ENCODE measurements at regions of chr13 and their contacts with region 1.

Region 1: DNA sequence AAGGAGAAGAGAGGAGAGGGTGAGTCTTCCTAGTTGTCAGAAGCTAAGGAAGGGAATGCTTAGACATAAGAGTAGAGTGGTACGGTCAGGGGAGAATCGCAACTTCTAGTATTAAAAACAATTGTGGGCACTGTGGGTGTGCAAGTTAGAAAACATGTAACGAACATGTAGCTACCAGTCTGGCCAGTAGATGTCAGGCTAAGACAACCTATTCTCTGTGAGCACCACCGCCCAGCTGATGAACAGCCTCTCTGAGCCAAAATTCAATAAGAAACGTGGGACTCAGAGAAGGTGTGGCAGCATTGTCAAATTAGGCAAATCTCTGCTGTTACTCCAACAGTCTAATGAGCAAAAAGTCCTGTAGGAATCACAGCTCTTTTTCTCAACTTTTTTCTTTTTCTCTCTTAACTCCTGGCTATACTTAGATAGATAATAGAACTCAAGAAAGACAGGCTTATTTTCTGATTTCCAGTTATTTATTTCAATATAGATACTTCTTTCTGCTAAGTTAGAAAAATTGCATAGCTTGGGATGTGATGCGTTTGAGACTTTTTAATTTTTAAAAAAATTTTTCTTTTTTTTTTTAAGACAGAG is 186.2 kb downstream of the USP12 start:
- DNase-seq: peak; percentile 62
- H3K4me3 ChIP-seq: no peak overlapping the region
- H3K27ac ChIP-seq: no peak overlapping the region
- H3K4me1 ChIP-seq: no peaks in the 10 kb centered on the region
- H3K27me3 ChIP-seq: peaks cover 3% of the 10 kb centered on the region
- CTCF ChIP-seq: peak; percentile 70 to 72

Region 2: GRCh38 chr13:26442541-26442940 is 542.8 kb before region 1 on chr13:
- CTCF ChIA-PET with region 1: no interaction called
- dilution Hi-C with region 1: no loop called
- in situ Hi-C with region 1: no loop called
- intact Hi-C with region 1: no loop called
- DNase-seq: no peak
- H3K4me3 ChIP-seq: no peak overlapping the region
- H3K27ac ChIP-seq: no peak overlapping the region
- H3K4me1 ChIP-seq: no peaks in the 10 kb centered on the region
- H3K27me3 ChIP-seq: no peaks in the 10 kb centered on the region
- CTCF ChIP-seq: no peak

Region 3: GRCh38 chr13:26653310-26653709 is 332.1 kb before region 1 on chr13:
- CTCF ChIA-PET with region 1: no interaction called
- dilution Hi-C with region 1: no loop called
- in situ Hi-C with region 1: no loop called
- intact Hi-C with region 1: no loop called
- DNase-seq: peak; percentile 50
- H3K4me3 ChIP-seq: no peak overlapping the region
- H3K27ac ChIP-seq: no peak overlapping the region
- H3K4me1 ChIP-seq: no peaks in the 10 kb centered on the region
- H3K27me3 ChIP-seq: no peaks in the 10 kb centered on the region
- CTCF ChIP-seq: no peak

Region 4: GRCh38 chr13:26813321-26813979 is 171.9 kb before region 1 on chr13:
- CTCF ChIA-PET with region 1: no interaction called
- dilution Hi-C with region 1: no loop called
- in situ Hi-C with region 1: no loop called
- intact Hi-C with region 1: no loop called
- DNase-seq: no peak
- H3K4me3 ChIP-seq: no peak overlapping the region
- H3K27ac ChIP-seq: no peak overlapping the region
- H3K4me1 ChIP-seq: no peaks in the 10 kb centered on the region
- H3K27me3 ChIP-seq: peaks cover 2% of the 10 kb centered on the region
- CTCF ChIP-seq: no peak

Region 5: DNA sequence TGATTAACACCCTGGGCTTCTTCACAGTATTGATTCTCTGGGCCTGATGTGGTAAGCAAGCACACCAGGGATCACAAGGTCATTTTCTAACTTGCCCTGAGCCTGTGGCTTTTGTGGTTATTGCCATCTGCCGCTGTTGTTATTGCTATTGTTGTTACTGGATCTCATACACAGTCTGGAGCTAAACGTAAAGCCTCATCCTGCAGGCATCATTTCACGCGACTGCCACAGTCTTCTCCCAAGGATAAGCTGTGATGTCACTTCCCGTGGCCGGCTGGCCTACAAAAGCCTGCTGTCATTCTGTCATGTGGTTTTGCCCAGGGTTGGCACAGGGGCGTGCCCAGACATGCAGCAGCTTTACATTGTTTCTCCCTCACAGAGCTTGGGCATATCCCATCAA is 70.8 kb before region 1 on chr13:
- CTCF ChIA-PET with region 1: no interaction called
- dilution Hi-C with region 1: no loop called
- in situ Hi-C with region 1: no loop called
- intact Hi-C with region 1: no loop called
- DNase-seq: peak; percentile 86
- H3K4me3 ChIP-seq: no peak overlapping the region
- H3K27ac ChIP-seq: no peak overlapping the region
- H3K4me1 ChIP-seq: peaks cover 13% of the 10 kb centered on the region
- H3K27me3 ChIP-seq: no peaks in the 10 kb centered on the region
- CTCF ChIP-seq: no peak

Region 6: GRCh38 chr13:26946684-26947343 is 38.6 kb before region 1 on chr13:
- CTCF ChIA-PET with region 1: interaction called, 3 read pairs
- dilution Hi-C with region 1: no loop called
- in situ Hi-C with region 1: no loop called
- intact Hi-C with region 1: loop called (anchors 1 kb)
- DNase-seq: peak; percentile 29
- H3K4me3 ChIP-seq: no peak overlapping the region
- H3K27ac ChIP-seq: no peak overlapping the region
- H3K4me1 ChIP-seq: no peaks in the 10 kb centered on the region
- H3K27me3 ChIP-seq: no peaks in the 10 kb centered on the region
- CTCF ChIP-seq: peak; percentile 78 to 86

Region 7: GRCh38 chr13:27203854-27204253 is 218.5 kb after region 1 on chr13:
- CTCF ChIA-PET with region 1: no interaction called
- dilution Hi-C with region 1: no loop called
- in situ Hi-C with region 1: loop called in 1 of 2 experiments (anchors 10 kb)
- intact Hi-C with region 1: loop called (anchors 1 kb)
- DNase-seq: peak; percentile 15
- H3K4me3 ChIP-seq: no peak overlapping the region
- H3K27ac ChIP-seq: no peak overlapping the region
- H3K4me1 ChIP-seq: no peaks in the 10 kb centered on the region
- H3K27me3 ChIP-seq: no peaks in the 10 kb centered on the region
- CTCF ChIP-seq: peak; percentile 19 to 52

Region 8: GRCh38 chr13:27270594-27271520 is 285.5 kb after region 1 on chr13 and contains the start of gene RASL11A:
- CTCF ChIA-PET with region 1: no interaction called
- dilution Hi-C with region 1: no loop called
- in situ Hi-C with region 1: no loop called
- intact Hi-C with region 1: loop called (anchors 5 kb)
- DNase-seq: peak; percentile 83
- H3K4me3 ChIP-seq: peak within 1 kb of the TSS; percentile 62 to 73 (median 69)
- H3K27ac ChIP-seq: no peak within 1 kb of the TSS
- H3K4me1 ChIP-seq: peaks cover 7% of the 10 kb centered on the region
- H3K27me3 ChIP-seq: no peaks in the 10 kb centered on the region
- CTCF ChIP-seq: peak; percentile 55 to 77
- total RNA-seq, gene RASL11A: 1.6 to 2.2 TPM

Region 9: GRCh38 chr13:27980280-27980998 is 995.1 kb after region 1 on chr13:
- CTCF ChIA-PET with region 1: no interaction called
- dilution Hi-C with region 1: no loop called
- in situ Hi-C with region 1: loop called (anchors 25 kb)
- intact Hi-C with region 1: loop called (anchors 5 kb)
- DNase-seq: no peak
- H3K4me3 ChIP-seq: no peak overlapping the region
- H3K27ac ChIP-seq: no peak overlapping the region
- H3K4me1 ChIP-seq: no peaks in the 10 kb centered on the region
- H3K27me3 ChIP-seq: peaks cover 62% of the 10 kb centered on the region
- CTCF ChIP-seq: no peak